A673 (cell line): ENCODE measurements at regions of chr14 and their contacts with region 1.

Region 1: DNA sequence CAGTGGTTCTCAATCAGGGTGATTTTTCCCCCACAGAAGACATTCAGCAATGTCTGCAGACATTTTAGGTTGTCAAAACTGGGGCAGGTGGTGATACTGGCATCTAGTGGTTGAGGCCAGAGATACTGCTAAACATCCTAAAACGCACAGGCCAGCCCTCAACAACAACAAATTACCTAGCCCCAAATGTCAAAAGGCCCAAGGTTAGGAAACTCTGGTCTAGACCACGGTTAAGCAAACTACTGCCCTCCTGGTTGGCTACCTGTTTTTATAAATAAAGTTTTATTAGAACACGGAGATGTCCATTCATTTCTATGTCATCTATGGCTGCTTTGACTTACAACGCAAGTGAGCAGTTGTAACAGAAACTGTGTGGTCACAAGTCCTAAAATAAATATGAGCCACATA is 186.7 kb downstream of the EFCAB11 start:
- DNase-seq: peak; percentile 34
- H3K4me3 ChIP-seq: no peak overlapping the region
- H3K27ac ChIP-seq: no peak overlapping the region
- H3K4me1 ChIP-seq: no peaks in the 10 kb centered on the region
- H3K27me3 ChIP-seq: no peaks in the 10 kb centered on the region
- CTCF ChIP-seq: peak; percentile 62

Region 2: GRCh38 chr14:89040460-89041259 is 727.2 kb before region 1 on chr14:
- CTCF ChIA-PET with region 1: no interaction called
- POLR2A ChIA-PET with region 1: no interaction called
- intact Hi-C with region 1: loop called (anchors 5 kb)
- DNase-seq: peak; percentile 81
- H3K4me3 ChIP-seq: peak overlapping the region; percentile 30
- H3K27ac ChIP-seq: no peak overlapping the region
- H3K4me1 ChIP-seq: no peaks in the 10 kb centered on the region
- H3K27me3 ChIP-seq: peaks cover 12% of the 10 kb centered on the region
- CTCF ChIP-seq: peak; percentile 98

Region 3: DNA sequence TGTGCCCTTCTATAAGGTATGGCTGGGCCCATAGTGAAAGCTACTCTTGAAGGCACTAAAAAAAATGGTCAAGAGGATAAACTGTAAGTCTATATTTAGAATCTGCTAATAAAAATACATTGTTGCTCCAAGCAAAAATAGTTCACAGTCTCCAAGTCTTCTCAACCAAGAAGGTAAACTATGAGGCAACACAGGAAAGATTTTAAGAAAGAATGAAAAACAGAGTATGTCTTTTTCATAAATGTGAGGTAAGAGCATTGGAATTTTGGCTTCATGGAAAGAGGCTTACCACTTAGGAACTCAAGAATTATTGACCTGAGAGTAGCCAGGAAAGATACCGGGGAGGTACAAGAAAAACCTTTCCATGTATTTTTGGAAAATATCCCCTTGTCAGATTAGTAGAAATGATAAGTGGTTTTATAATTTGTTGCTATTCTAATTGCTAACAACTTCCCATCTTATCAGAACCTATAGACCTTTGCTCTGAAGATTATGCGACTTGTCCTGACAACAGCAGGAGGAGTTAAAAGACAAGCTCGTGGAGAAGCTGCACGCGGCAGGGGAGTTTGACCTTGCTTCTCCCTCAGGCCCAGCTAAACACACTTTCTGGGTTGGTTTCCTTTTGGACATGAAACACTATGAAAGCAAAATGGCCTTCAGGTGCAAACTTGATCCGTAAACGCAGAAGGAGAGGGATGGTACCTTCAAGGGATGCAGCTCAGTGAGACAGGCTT is 588.9 kb before region 1 on chr14:
- CTCF ChIA-PET with region 1: no interaction called
- POLR2A ChIA-PET with region 1: no interaction called
- intact Hi-C with region 1: loop called (anchors 2 kb)
- DNase-seq: no peak
- H3K4me3 ChIP-seq: no peak overlapping the region
- H3K27ac ChIP-seq: no peak overlapping the region
- H3K4me1 ChIP-seq: no peaks in the 10 kb centered on the region
- H3K27me3 ChIP-seq: no peaks in the 10 kb centered on the region
- CTCF ChIP-seq: no peak